CD4-positive, alpha-beta T cell (primary cell): ENCODE measurements at regions of chr3 and their contacts with region 1.

Region 1: GRCh38 chr3:49389297-49389696 is 22.5 kb downstream of the RHOA start:
- DNase-seq: no peak
- ATAC-seq: no peak
- H3K4me3 ChIP-seq: no peak overlapping the region
- H3K4me3 Mint-ChIP-seq: no peak overlapping the region
- H3K27ac ChIP-seq: no peak overlapping the region
- H3K27ac Mint-ChIP-seq: peak overlapping the region; percentile 37
- H3K4me1 ChIP-seq: peaks cover 74% of the 10 kb centered on the region
- H3K4me1 Mint-ChIP-seq: peaks cover 51% of the 10 kb centered on the region
- H3K27me3 ChIP-seq: no peaks in the 10 kb centered on the region
- H3K27me3 Mint-ChIP-seq: no peaks in the 10 kb centered on the region
- CTCF ChIP-seq: no peak

Region 2: GRCh38 chr3:47882338-47882737 is 1507.0 kb before region 1 on chr3:
- CTCF ChIA-PET with region 1: no interaction called
- POLR2A ChIA-PET with region 1: no interaction called
- intact Hi-C with region 1: no loop called
- DNase-seq: no peak
- ATAC-seq: no peak
- H3K4me3 ChIP-seq: no peak overlapping the region
- H3K4me3 Mint-ChIP-seq: no peak overlapping the region
- H3K27ac ChIP-seq: no peak overlapping the region
- H3K27ac Mint-ChIP-seq: no peak overlapping the region
- H3K4me1 ChIP-seq: no peaks in the 10 kb centered on the region
- H3K4me1 Mint-ChIP-seq: peaks cover 3% of the 10 kb centered on the region
- H3K27me3 ChIP-seq: no peaks in the 10 kb centered on the region
- H3K27me3 Mint-ChIP-seq: no peaks in the 10 kb centered on the region
- CTCF ChIP-seq: no peak

Region 3: GRCh38 chr3:49248846-49249238 is 140.5 kb before region 1 on chr3:
- CTCF ChIA-PET with region 1: no interaction called
- POLR2A ChIA-PET with region 1: no interaction called
- intact Hi-C with region 1: no loop called
- DNase-seq: peak in 3 of 14 experiments; percentile 23 to 65 (median 56)
- ATAC-seq: no peak
- H3K4me3 ChIP-seq: no peak overlapping the region
- H3K4me3 Mint-ChIP-seq: no peak overlapping the region
- H3K27ac ChIP-seq: no peak overlapping the region
- H3K27ac Mint-ChIP-seq: no peak overlapping the region
- H3K4me1 ChIP-seq: no peaks in the 10 kb centered on the region
- H3K4me1 Mint-ChIP-seq: no peaks in the 10 kb centered on the region
- H3K27me3 ChIP-seq: no peaks in the 10 kb centered on the region
- H3K27me3 Mint-ChIP-seq: peaks cover 4% of the 10 kb centered on the region
- CTCF ChIP-seq: no peak

Region 4: DNA sequence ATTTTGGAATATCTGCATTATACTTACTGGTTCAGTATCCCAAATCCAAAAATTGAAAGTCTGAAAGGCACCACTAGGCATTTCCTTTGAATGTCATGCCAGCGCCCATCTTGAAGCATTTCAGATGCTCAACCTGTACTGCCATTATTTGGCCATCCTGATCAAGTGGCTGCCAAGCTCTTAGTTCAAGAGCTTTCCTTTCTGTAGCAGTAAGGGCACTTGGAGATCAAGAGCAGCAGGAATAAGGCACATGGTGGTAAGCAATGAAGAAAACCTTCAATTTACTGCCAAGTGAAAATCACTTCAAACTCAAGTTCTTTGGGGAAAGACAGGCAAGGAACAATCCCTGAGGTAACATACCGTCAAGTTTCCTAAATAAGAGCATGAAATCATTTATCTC is 12.5 kb after region 1 on chr3:
- CTCF ChIA-PET with region 1: no interaction called
- POLR2A ChIA-PET with region 1: interaction called, 3 read pairs
- intact Hi-C with region 1: loop called in 1 of 2 experiments (anchors 1 kb)
- DNase-seq: no peak
- ATAC-seq: no peak
- H3K4me3 ChIP-seq: no peak overlapping the region
- H3K4me3 Mint-ChIP-seq: no peak overlapping the region
- H3K27ac ChIP-seq: no peak overlapping the region
- H3K27ac Mint-ChIP-seq: peak overlapping the region; percentile 14
- H3K4me1 ChIP-seq: peaks cover 62% of the 10 kb centered on the region
- H3K4me1 Mint-ChIP-seq: peaks cover 69% of the 10 kb centered on the region
- H3K27me3 ChIP-seq: no peaks in the 10 kb centered on the region
- H3K27me3 Mint-ChIP-seq: no peaks in the 10 kb centered on the region
- CTCF ChIP-seq: no peak